ENCODE measurements at regions of chr22 and their contacts with region 1.

Region 1: GRCh38 chr22:40898850-40899357 is 37.0 kb upstream of the DNAJB7 start:
- DNase-seq: peak; percentile 67
- ATAC-seq: peak; percentile 88
- H3K4me3 ChIP-seq: no peak overlapping the region
- H3K27ac ChIP-seq: no peak overlapping the region
- H3K4me1 ChIP-seq: no peaks in the 10 kb centered on the region
- H3K27me3 ChIP-seq: no peaks in the 10 kb centered on the region
- CTCF ChIP-seq: peak; percentile 66
- POLR2A ChIP-seq: no peak
- RAD21 ChIP-seq: peak; percentile 77

Region 2: DNA sequence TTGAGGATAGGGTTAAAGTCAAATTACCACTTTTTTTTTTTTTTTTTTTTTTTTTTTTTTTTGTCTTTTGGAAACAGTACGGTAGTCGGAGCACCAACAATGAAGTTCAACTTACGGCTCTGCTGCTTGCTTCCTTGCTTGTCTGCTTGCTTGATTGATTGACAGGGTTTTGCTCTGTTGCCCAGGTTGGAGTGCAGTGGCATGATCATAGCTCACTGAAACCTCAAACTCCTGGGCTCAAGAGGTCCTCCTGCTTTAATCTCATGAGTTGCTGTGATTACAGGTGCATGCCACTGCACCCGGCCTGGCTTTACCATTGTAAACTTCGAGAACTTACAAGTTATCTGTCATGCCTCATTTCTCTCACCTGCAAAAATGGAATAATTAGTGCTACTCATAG is 522.8 kb before region 1 on chr22:
- CTCF ChIA-PET with region 1: no interaction called
- POLR2A ChIA-PET with region 1: no interaction called
- dilution Hi-C with region 1: no loop called
- in situ Hi-C with region 1: no loop called
- intact Hi-C with region 1: loop called (anchors 10 kb)
- DNase-seq: no peak
- ATAC-seq: no peak
- H3K4me3 ChIP-seq: no peak overlapping the region
- H3K27ac ChIP-seq: no peak overlapping the region
- H3K4me1 ChIP-seq: peaks cover 3% of the 10 kb centered on the region; the same call in 1 of the 2 replicates
- H3K27me3 ChIP-seq: no peaks in the 10 kb centered on the region
- CTCF ChIP-seq: no peak
- POLR2A ChIP-seq: no peak
- RAD21 ChIP-seq: no peak

Region 3: GRCh38 chr22:40651563-40652501 is 247.1 kb before region 1 on chr22:
- CTCF ChIA-PET with region 1: no interaction called
- POLR2A ChIA-PET with region 1: no interaction called
- dilution Hi-C with region 1: no loop called
- in situ Hi-C with region 1: no loop called
- intact Hi-C with region 1: loop called (anchors 1 kb)
- DNase-seq: peak; percentile 100
- ATAC-seq: peak; percentile 94
- H3K4me3 ChIP-seq: peak overlapping the region; percentile 59
- H3K27ac ChIP-seq: peak overlapping the region; percentile 93
- H3K4me1 ChIP-seq: peaks cover 13% of the 10 kb centered on the region
- H3K27me3 ChIP-seq: no peaks in the 10 kb centered on the region
- CTCF ChIP-seq: no peak
- POLR2A ChIP-seq: peak; percentile 90
- RAD21 ChIP-seq: peak; percentile 13; the same call in 1 of the 2 replicates

Region 4: GRCh38 chr22:40679964-40680818 is 218.7 kb before region 1 on chr22:
- CTCF ChIA-PET with region 1: interaction called, 3 read pairs
- POLR2A ChIA-PET with region 1: no interaction called
- dilution Hi-C with region 1: no loop called
- in situ Hi-C with region 1: no loop called
- intact Hi-C with region 1: loop called (anchors 2 kb)
- DNase-seq: peak; percentile 31
- ATAC-seq: no peak
- H3K4me3 ChIP-seq: no peak overlapping the region
- H3K27ac ChIP-seq: no peak overlapping the region
- H3K4me1 ChIP-seq: peaks cover 16% of the 10 kb centered on the region
- H3K27me3 ChIP-seq: no peaks in the 10 kb centered on the region
- CTCF ChIP-seq: no peak
- POLR2A ChIP-seq: no peak
- RAD21 ChIP-seq: no peak

Region 5: DNA sequence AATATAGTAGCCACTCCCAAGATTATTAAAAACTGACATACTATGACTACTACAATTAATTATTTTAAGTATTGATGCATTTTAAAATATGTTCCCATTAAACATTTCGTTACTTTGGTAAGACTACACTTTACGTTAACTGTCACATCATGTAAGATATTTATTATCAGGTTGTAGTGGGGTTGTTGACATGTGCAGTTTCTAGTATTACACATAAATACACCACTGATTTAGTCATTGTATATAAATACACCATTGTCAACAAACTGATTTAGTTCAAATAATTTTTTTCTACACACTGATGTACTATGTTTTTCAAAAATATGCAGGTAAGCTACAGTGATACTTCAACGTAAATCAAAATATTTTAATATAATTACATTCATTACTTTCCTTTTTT is 54.0 kb before region 1 on chr22:
- CTCF ChIA-PET with region 1: interaction called, 3 read pairs
- POLR2A ChIA-PET with region 1: no interaction called
- dilution Hi-C with region 1: no loop called
- in situ Hi-C with region 1: no loop called
- intact Hi-C with region 1: loop called (anchors 10 kb)
- DNase-seq: no peak
- ATAC-seq: no peak
- H3K4me3 ChIP-seq: no peak overlapping the region
- H3K27ac ChIP-seq: no peak overlapping the region
- H3K4me1 ChIP-seq: peaks cover 2% of the 10 kb centered on the region; the same call in 1 of the 2 replicates
- H3K27me3 ChIP-seq: no peaks in the 10 kb centered on the region
- CTCF ChIP-seq: no peak
- POLR2A ChIP-seq: no peak
- RAD21 ChIP-seq: no peak

Region 6: GRCh38 chr22:40856513-40857308 is 42.2 kb before region 1 on chr22 and contains the starts of genes ST13 and XPNPEP3:
- CTCF ChIA-PET with region 1: no interaction called
- POLR2A ChIA-PET with region 1: interaction called, 10 read pairs
- dilution Hi-C with region 1: no loop called
- in situ Hi-C with region 1: no loop called
- intact Hi-C with region 1: no loop called
- DNase-seq: peak; percentile 95
- ATAC-seq: peak; percentile 98
- H3K4me3 ChIP-seq: peak within 1 kb of the TSS; percentile 67
- H3K27ac ChIP-seq: peak within 1 kb of the TSS; percentile 96
- H3K4me1 ChIP-seq: peaks cover 9% of the 10 kb centered on the region
- H3K27me3 ChIP-seq: no peaks in the 10 kb centered on the region
- CTCF ChIP-seq: 0 out of 2 replicates have a peak, but pooled peaks have one; percentile 29
- POLR2A ChIP-seq: peak; percentile 73; the same call in 1 of the 2 replicates
- RAD21 ChIP-seq: no peak
- total RNA-seq, gene ST13: 228 and 235 TPM in 2 replicates
- total RNA-seq, gene XPNPEP3: 10.9 and 18.1 TPM in 2 replicates

Measured in IMR-90 (cell line).